Activated T-helper 1 cell treated with anti-CD3 and anti-CD28 coated beads, Interleukin-12 subunit alpha, Interleukin-12 subunit beta, Interleukin-2, Interleukin-4 antibody, amounts not matched to agents 30 ng/mL and 10 ng/mL and 1 ng/mL, durations not matched to agents 14 hours and 24 hours and 36 hours (primary cell): ENCODE measurements at regions of chr2 and their contacts with region 1.

Region 1: DNA sequence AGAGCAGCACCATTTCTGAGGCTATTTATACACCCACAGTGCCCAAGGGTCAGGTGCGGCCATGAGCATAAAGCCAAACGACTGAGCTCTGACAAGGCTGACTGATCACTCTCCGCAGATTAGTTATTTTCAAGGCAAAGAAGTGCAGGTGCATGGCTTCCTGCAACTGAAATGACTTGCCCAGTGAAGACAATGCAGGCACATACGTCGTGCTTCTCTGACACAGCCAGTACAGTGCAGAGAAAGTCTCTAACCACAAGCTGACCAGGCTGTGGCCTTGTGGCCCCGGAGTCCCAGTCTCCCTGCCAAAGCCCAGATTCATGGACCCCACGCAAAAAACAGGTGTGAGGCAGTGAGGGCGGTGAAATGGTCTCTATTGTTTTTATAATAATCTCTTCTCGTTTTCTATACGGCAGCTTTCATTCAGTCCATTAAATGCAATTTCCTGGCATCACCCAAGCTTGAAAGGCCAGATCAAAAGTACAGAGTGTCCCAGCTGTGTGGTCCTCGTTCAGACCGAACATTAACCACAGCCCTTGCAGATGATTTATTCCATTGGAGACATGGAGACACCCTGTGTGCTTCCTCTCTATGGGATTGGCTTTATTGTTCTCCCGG is 447.0 kb upstream of the ID2 start:
- DNase-seq: no peak
- H3K4me3 Mint-ChIP-seq: no peak overlapping the region
- H3K27ac Mint-ChIP-seq: no peak overlapping the region
- H3K4me1 Mint-ChIP-seq: peaks cover 53% of the 10 kb centered on the region
- H3K27me3 Mint-ChIP-seq: peaks cover 9% of the 10 kb centered on the region

Region 2: GRCh38 chr2:8004250-8004681 is 230.6 kb before region 1 on chr2:
- intact Hi-C with region 1: loop called (anchors 5 kb)
- DNase-seq: no peak
- H3K4me3 Mint-ChIP-seq: no peak overlapping the region
- H3K27ac Mint-ChIP-seq: no peak overlapping the region
- H3K4me1 Mint-ChIP-seq: peaks cover 10% of the 10 kb centered on the region
- H3K27me3 Mint-ChIP-seq: peaks cover 2% of the 10 kb centered on the region

Region 3: DNA sequence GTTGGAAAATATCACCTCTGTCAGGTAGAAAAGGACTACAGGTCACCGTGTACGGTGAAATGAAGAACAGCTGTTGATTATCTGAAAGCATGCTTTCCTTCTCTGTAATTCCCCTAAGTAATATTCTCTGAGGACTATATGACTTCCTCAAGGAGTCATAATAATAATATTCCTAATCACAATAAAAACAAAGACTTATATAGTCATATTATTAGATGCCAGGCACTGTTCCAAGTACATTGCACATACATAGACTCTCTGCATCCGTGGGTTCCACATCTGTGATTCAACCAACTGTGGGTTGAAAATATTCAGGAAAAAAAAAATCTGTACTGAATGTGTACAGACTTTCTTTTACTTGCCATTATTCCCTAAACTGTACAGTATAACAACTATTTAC is 65.4 kb before region 1 on chr2:
- intact Hi-C with region 1: loop called (anchors 5 kb)
- DNase-seq: no peak
- H3K4me3 Mint-ChIP-seq: no peak overlapping the region
- H3K27ac Mint-ChIP-seq: no peak overlapping the region
- H3K4me1 Mint-ChIP-seq: peaks cover 13% of the 10 kb centered on the region
- H3K27me3 Mint-ChIP-seq: no peaks in the 10 kb centered on the region

Region 4: GRCh38 chr2:8252997-8253694 is 18.3 kb after region 1 on chr2:
- intact Hi-C with region 1: loop called (anchors 1 kb)
- DNase-seq: no peak
- H3K4me3 Mint-ChIP-seq: no peak overlapping the region
- H3K27ac Mint-ChIP-seq: no peak overlapping the region
- H3K4me1 Mint-ChIP-seq: peaks cover 30% of the 10 kb centered on the region
- H3K27me3 Mint-ChIP-seq: peaks cover 15% of the 10 kb centered on the region

Region 5: GRCh38 chr2:8285081-8285480 is 50.2 kb after region 1 on chr2:
- intact Hi-C with region 1: no loop called
- DNase-seq: no peak
- H3K4me3 Mint-ChIP-seq: no peak overlapping the region
- H3K27ac Mint-ChIP-seq: no peak overlapping the region
- H3K4me1 Mint-ChIP-seq: peaks cover 31% of the 10 kb centered on the region
- H3K27me3 Mint-ChIP-seq: peaks cover 11% of the 10 kb centered on the region

Region 6: DNA sequence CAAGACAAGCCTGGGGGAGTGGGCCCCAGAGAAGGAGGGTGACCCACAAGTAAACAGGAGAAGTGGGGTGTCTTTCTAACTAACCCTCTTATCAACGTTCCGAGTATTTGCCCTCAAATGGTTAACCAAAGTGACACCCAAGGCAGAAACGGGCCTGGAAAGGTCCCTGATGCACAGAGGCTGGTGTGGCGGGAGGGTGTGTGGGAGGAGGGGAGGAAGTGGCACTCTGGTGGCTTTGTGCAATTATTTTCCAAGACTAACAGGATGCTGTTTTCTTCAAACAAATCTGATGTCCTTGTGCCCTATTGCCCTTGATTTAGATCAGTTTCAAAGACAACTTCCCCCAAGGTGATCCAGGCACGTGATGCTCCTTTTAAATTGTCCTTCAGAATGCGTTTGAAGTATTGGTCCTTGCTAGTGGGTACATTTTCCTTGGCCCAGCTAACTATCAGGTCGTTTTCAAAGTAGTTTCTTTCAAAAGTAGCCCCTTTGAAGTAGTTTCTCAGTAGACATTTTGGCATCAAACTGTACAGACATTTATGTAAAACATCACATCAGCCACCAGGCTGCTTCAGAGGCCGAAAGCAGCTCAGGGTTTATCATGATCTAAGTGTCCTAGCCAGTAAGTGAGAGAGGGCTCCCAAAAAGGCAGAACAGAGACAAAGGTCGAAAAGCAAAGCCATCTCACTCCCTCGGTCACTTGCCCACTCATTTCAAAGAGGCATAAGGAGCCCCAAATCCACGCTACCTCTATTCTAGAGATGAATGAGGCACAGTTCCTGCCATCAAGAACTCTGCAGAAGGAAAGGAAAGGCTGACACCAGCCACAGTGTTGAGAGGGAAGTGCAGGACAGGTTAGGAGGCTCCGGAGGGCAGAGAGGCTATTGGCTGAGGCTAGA is 75.9 kb after region 1 on chr2:
- intact Hi-C with region 1: loop called (anchors 1 kb)
- DNase-seq: peak; percentile 51
- H3K4me3 Mint-ChIP-seq: peak overlapping the region; percentile 8
- H3K27ac Mint-ChIP-seq: peak overlapping the region; percentile 83
- H3K4me1 Mint-ChIP-seq: peaks cover 78% of the 10 kb centered on the region
- H3K27me3 Mint-ChIP-seq: peaks cover 2% of the 10 kb centered on the region